ENCODE measurements at regions of chr7 and their contacts with region 1.

Region 1: DNA sequence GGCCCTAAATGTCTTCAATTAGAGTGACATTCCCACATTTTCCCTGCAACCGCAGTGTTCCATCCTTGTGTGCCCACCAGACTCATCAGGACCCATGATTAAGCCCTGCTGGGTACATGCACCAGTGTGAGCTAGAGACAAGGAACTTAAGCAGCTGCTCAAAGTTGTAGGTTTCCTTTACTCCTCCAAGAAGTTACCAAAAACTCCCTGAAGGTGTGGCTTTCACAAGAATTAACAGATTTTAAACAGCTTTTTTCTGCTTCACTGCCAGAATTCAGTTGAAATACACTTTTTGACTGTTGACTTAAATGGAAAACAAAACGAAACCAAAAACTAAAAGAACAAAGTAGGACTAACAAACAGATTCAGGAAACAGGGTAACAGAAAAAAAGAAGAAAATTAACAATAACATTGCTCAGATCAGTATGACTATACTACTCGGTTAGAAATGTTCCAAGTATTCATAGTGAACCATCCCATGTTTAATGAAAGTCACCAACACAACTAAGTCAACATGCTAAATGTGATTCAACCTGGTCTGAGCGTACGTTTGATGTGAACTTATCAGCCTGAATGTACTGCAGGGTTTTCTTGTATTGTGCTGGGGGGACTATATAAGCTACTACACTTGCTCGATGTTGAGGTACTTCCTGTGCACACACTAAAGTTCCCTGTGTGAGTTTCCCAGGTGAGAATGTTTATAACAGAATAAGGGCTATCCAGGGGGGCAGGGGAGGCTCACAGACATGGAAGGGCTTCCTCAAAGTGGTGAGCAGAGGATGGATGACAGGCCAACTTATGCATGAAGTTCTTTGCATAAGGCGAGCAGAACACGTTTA is 22.2 kb downstream of the SLC37A3 start:
- DNase-seq: peak; percentile 61
- H3K4me3 Mint-ChIP-seq: peak overlapping the region; percentile 62
- H3K27ac Mint-ChIP-seq: peak overlapping the region; percentile 99
- H3K4me1 Mint-ChIP-seq: peaks cover 51% of the 10 kb centered on the region
- H3K27me3 Mint-ChIP-seq: no peaks in the 10 kb centered on the region

Region 2: DNA sequence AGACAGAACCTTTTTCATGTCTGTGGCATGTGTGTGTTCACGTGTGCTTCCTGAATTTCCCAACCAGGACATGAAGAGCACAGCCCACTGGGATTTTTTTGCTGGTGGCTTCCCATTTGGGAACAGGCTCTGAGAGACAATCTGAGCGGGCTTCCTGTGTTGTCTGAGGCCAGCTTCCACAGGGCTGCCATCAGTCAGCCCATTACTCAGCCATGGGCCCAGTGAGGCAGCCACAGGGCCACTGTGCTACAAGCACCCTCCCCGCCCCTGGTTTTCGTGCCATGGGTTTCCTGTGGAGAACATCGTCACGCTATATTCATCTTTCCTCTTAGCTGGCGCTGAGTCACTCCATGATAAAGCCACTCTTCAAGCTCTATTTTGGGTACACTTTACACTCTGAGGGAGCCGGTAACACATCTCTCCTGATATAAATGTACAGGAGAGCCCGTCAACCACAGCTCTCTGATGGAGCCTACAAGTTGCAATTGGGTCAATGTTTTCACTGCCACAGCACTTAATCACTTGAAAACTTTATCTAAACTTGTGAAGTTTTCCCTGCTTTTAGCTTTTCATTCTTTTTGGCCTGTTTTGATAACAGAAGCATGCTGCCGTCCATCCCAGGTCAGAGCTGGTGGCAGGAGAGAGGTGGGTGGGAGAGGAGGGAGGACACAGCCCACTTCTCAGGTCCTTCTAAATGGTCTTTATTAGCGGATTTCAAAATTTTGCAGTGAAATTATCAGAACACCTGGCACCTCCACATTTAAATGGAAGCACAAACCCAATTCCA is 695.2 kb before region 1 on chr7:
- CTCF ChIA-PET with region 1: no interaction called
- POLR2A ChIA-PET with region 1: no interaction called
- intact Hi-C with region 1: loop called (anchors 5 kb)
- DNase-seq: peak; percentile 92
- H3K4me3 Mint-ChIP-seq: no peak overlapping the region
- H3K27ac Mint-ChIP-seq: peak overlapping the region; percentile 94
- H3K4me1 Mint-ChIP-seq: peaks cover 48% of the 10 kb centered on the region
- H3K27me3 Mint-ChIP-seq: no peaks in the 10 kb centered on the region

Region 3: GRCh38 chr7:139784648-139785047 is 591.5 kb before region 1 on chr7:
- CTCF ChIA-PET with region 1: no interaction called
- POLR2A ChIA-PET with region 1: no interaction called
- intact Hi-C with region 1: no loop called
- DNase-seq: no peak
- H3K4me3 Mint-ChIP-seq: no peak overlapping the region
- H3K27ac Mint-ChIP-seq: no peak overlapping the region
- H3K4me1 Mint-ChIP-seq: no peaks in the 10 kb centered on the region
- H3K27me3 Mint-ChIP-seq: peaks cover 11% of the 10 kb centered on the region

Region 4: DNA sequence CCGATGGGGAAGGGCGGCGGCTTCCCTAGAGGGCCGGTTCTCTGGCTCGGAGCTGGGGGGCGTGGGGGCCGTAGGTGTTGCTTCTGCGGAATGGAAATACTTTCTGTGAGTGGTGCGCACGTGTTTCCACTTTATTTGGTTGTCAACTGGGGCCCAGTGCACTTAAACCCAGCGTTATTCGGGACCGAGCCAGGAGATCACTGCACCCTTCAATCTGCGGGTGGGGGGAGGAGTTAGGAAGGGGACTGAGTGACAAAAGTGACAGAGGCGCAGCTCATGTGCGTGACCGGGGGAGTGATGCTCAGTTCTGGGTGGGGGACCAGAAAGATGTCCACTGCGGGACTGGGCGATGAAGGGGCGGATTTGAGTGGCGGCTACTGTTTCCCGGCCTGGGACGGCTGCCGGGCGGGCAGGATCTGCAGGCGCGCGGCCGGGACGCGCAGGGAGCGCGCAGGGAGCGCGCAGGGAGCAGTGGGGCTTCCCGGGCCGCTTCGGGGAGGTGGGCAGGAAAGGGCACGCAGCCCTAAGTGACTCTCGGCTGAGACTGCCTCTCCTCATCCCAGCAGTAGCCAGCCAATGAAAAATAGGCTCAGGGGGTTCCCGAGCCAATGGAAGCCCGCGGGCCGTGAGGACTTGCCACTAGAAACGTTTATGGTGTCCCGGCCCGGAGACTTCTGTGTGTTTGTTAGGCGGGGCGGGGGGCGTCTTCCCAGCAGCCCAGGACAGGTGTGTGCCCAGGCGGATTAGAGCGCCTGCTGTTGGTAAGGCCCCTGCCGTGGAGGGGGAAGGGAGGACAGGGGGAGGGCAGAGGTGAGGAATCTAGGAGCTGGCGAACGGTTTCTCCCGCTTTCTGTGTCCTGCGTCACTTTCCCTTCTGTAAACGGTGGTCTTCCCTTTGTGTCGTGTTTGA is 145.0 kb before region 1 on chr7:
- CTCF ChIA-PET with region 1: no interaction called
- POLR2A ChIA-PET with region 1: interaction called, 9 read pairs
- intact Hi-C with region 1: loop called (anchors 1 kb)
- DNase-seq: peak; percentile 78
- H3K4me3 Mint-ChIP-seq: peak overlapping the region; percentile 79
- H3K27ac Mint-ChIP-seq: peak overlapping the region; percentile 99
- H3K4me1 Mint-ChIP-seq: peaks cover 32% of the 10 kb centered on the region
- H3K27me3 Mint-ChIP-seq: no peaks in the 10 kb centered on the region

Region 5: GRCh38 chr7:140358412-140359051 is 17.6 kb before region 1 on chr7:
- CTCF ChIA-PET with region 1: interaction called, 37 read pairs
- POLR2A ChIA-PET with region 1: interaction called, 46 read pairs
- intact Hi-C with region 1: loop called (anchors 1 kb)
- DNase-seq: peak; percentile 69
- H3K4me3 Mint-ChIP-seq: peak overlapping the region; percentile 46
- H3K27ac Mint-ChIP-seq: peak overlapping the region; percentile 97
- H3K4me1 Mint-ChIP-seq: peaks cover 34% of the 10 kb centered on the region
- H3K27me3 Mint-ChIP-seq: no peaks in the 10 kb centered on the region

Region 6: GRCh38 chr7:140397784-140398750 is 22.0 kb after region 1 on chr7 and contains the start of gene SLC37A3:
- CTCF ChIA-PET with region 1: interaction called, 7 read pairs
- POLR2A ChIA-PET with region 1: interaction called, 21 read pairs
- intact Hi-C with region 1: loop called (anchors 1 kb)
- DNase-seq: peak; percentile 93
- H3K4me3 Mint-ChIP-seq: peak within 1 kb of the TSS; percentile 99
- H3K27ac Mint-ChIP-seq: peak within 1 kb of the TSS; percentile 95
- H3K4me1 Mint-ChIP-seq: peaks cover 36% of the 10 kb centered on the region
- H3K27me3 Mint-ChIP-seq: no peaks in the 10 kb centered on the region
- total RNA-seq, gene SLC37A3: 74.5 to 74.7 TPM

Region 7: DNA sequence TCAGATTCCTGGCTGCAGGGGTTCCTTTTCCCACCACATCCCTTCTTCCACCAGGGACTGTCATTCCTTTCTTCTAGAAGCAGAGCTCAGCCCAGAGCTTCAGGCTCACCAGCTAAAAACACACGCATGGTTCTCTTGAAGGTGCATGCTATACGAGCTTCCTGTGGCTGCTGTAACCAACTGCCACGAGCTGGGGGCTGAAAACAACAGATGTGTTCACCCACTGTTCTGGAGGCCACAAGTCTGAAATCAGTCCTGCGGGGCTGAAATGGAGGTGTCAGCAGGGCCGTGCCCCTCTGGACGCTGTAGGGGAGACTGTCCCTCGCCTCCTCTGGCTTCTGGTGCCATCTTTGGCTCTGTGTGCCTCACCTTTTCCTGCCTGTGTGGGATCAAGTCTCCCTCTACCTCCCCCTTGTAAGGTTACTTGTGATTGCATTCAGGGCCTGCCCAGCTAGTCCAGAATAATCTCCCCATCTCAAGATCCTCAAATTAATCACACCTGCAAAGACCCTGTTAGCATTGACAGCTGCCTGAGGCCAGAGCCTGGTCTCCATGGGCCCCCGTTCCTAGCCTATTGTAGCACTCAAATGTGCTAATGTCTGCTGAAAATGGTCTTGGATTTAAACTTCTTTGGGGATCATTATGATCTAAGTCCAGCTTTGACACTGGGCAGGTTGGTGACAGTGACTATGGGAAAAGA is 41.5 kb after region 1 on chr7:
- CTCF ChIA-PET with region 1: no interaction called
- POLR2A ChIA-PET with region 1: no interaction called
- intact Hi-C with region 1: no loop called
- DNase-seq: no peak
- H3K4me3 Mint-ChIP-seq: no peak overlapping the region
- H3K27ac Mint-ChIP-seq: no peak overlapping the region
- H3K4me1 Mint-ChIP-seq: no peaks in the 10 kb centered on the region
- H3K27me3 Mint-ChIP-seq: no peaks in the 10 kb centered on the region

Region 8: GRCh38 chr7:140439359-140439758 is 63.2 kb after region 1 on chr7:
- CTCF ChIA-PET with region 1: interaction called, 3 read pairs
- POLR2A ChIA-PET with region 1: interaction called, 12 read pairs
- intact Hi-C with region 1: no loop called
- DNase-seq: no peak
- H3K4me3 Mint-ChIP-seq: no peak overlapping the region
- H3K27ac Mint-ChIP-seq: peak overlapping the region; percentile 88
- H3K4me1 Mint-ChIP-seq: peaks cover 13% of the 10 kb centered on the region
- H3K27me3 Mint-ChIP-seq: no peaks in the 10 kb centered on the region